Activated naive CD4-positive, alpha-beta T cell treated with anti-CD3 and anti-CD28 coated beads for 36 hours (primary cell): ENCODE measurements at regions of chr1 and their contacts with region 1.

Region 1: GRCh38 chr1:221994274-221994698 is 252.4 kb upstream of the DUSP10 start:
- DNase-seq: peak; percentile 55
- H3K4me3 Mint-ChIP-seq: no peak overlapping the region
- H3K27ac Mint-ChIP-seq: peak overlapping the region; percentile 94
- H3K4me1 Mint-ChIP-seq: peaks cover 33% of the 10 kb centered on the region
- H3K27me3 Mint-ChIP-seq: no peaks in the 10 kb centered on the region

Region 2: GRCh38 chr1:221543529-221544120 is 450.7 kb before region 1 on chr1:
- CTCF ChIA-PET with region 1: no interaction called
- intact Hi-C with region 1: loop called (anchors 5 kb)
- DNase-seq: no peak
- H3K4me3 Mint-ChIP-seq: no peak overlapping the region
- H3K27ac Mint-ChIP-seq: no peak overlapping the region
- H3K4me1 Mint-ChIP-seq: no peaks in the 10 kb centered on the region
- H3K27me3 Mint-ChIP-seq: peaks cover 8% of the 10 kb centered on the region

Region 3: DNA sequence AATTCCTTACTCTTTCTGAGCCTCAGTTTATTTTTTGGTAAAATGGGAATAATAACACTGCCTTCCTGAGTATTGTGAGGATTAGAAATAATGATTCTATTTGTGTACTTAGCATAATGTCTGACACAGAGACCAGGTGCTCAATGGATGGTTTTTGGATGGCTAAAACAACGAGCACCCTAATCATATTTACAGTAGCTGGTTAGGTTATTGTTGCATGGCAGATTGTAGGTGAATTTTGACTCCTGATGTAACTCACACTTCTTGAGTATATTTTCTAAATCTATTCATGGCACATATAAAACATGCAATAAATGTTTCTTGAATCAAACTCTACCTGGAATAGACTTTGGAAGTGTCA is 240.5 kb before region 1 on chr1:
- CTCF ChIA-PET with region 1: no interaction called
- intact Hi-C with region 1: loop called (anchors 1 kb)
- DNase-seq: no peak
- H3K4me3 Mint-ChIP-seq: no peak overlapping the region
- H3K27ac Mint-ChIP-seq: peak overlapping the region; percentile 82
- H3K4me1 Mint-ChIP-seq: peaks cover 37% of the 10 kb centered on the region
- H3K27me3 Mint-ChIP-seq: peaks cover 2% of the 10 kb centered on the region

Region 4: DNA sequence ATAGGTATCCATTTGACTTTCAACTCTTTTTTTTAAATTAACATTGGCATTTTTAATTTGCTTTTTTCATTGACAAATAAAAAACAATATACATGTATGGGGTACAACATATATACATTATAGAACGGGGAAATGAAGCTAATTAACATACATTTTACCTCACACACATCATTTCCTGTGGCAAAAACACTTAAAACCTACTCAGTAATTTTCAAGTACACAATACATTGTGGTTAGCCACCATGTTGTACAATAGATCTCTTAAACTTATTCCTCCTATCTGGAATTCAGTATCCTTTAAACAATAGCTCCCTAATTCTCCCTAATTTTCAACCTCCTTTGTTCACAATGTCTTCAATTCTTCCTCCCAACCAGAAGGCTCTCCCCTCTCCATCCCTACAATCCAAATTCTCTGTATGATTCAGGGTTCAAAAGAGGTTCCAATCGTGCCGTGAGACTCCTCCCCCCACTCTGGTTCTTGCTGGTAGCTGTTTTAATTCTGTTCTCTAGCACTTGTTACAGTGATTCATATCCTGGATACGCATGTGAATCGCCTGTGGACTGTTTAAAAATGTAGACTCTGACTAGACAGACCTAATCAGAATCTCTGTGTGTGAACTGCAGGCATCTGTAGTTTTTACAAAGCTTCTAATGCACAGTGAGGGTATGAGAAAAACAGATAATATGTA is 164.8 kb before region 1 on chr1:
- CTCF ChIA-PET with region 1: no interaction called
- intact Hi-C with region 1: loop called (anchors 1 kb)
- DNase-seq: peak; percentile 83
- H3K4me3 Mint-ChIP-seq: peak overlapping the region; percentile 14
- H3K27ac Mint-ChIP-seq: peak overlapping the region; percentile 83
- H3K4me1 Mint-ChIP-seq: peaks cover 45% of the 10 kb centered on the region
- H3K27me3 Mint-ChIP-seq: no peaks in the 10 kb centered on the region

Region 5: DNA sequence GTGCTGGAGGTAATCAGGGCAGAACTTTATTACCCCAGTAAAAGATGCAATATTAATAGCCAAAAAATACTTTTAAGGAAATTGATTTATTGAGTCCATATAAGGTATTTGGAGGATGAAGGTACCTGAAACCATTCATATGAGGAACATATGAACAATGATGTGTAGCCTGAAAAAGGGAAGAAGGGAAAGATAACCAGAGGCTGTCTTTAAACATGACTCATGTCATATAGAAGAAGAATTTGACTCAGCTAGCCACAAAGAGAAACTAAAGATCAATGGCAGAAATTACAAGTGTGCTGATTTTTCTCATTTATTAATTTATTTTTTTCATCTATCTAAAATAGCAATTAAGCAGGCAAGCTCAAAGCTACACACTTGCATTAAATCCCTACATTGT is 116.2 kb before region 1 on chr1:
- CTCF ChIA-PET with region 1: no interaction called
- intact Hi-C with region 1: loop called (anchors 1 kb)
- DNase-seq: no peak
- H3K4me3 Mint-ChIP-seq: no peak overlapping the region
- H3K27ac Mint-ChIP-seq: no peak overlapping the region
- H3K4me1 Mint-ChIP-seq: peaks cover 9% of the 10 kb centered on the region
- H3K27me3 Mint-ChIP-seq: peaks cover 11% of the 10 kb centered on the region

Region 6: GRCh38 chr1:222182641-222183040 is 188.4 kb after region 1 on chr1:
- CTCF ChIA-PET with region 1: no interaction called
- intact Hi-C with region 1: no loop called
- DNase-seq: no peak
- H3K4me3 Mint-ChIP-seq: no peak overlapping the region
- H3K27ac Mint-ChIP-seq: no peak overlapping the region
- H3K4me1 Mint-ChIP-seq: no peaks in the 10 kb centered on the region
- H3K27me3 Mint-ChIP-seq: no peaks in the 10 kb centered on the region